HepG2 (cell line): ENCODE measurements at regions of chr7 and their contacts with region 1.

Region 1: GRCh38 chr7:120554960-120555571 is 282.1 kb downstream of the KCND2 start:
- DNase-seq: peak; percentile 49
- ATAC-seq: peak; percentile 96
- H3K4me3 ChIP-seq: no peak overlapping the region
- H3K27ac ChIP-seq: no peak overlapping the region
- H3K4me1 ChIP-seq: no peaks in the 10 kb centered on the region
- H3K27me3 ChIP-seq: no peaks in the 10 kb centered on the region
- CTCF ChIP-seq: peak; percentile 65
- EP300 ChIP-seq: no peak
- POLR2A ChIP-seq: no peak
- RAD21 ChIP-seq: no peak; the same call in 1 of the 2 replicates

Region 2: GRCh38 chr7:120272261-120272660 is 282.8 kb before region 1 on chr7:
- CTCF ChIA-PET with region 1: no interaction called
- POLR2A ChIA-PET with region 1: no interaction called
- in situ Hi-C with region 1: no loop called
- intact Hi-C with region 1: loop called (anchors 10 kb)
- DNase-seq: peak; percentile 22
- ATAC-seq: peak; percentile 79
- H3K4me3 ChIP-seq: no peak overlapping the region
- H3K27ac ChIP-seq: no peak overlapping the region
- H3K4me1 ChIP-seq: no peaks in the 10 kb centered on the region
- H3K27me3 ChIP-seq: peaks cover 0 to 21% of the 10 kb centered on the region in 2 experiments; a peak in 3 of 5 replicates
- CTCF ChIP-seq: peak; percentile 76
- EP300 ChIP-seq: no peak
- POLR2A ChIP-seq: no peak
- RAD21 ChIP-seq: no peak